ENCODE measurements at regions of chr16 and their contacts with region 1.

Region 1: GRCh38 chr16:89706507-89707263 is 5.2 kb upstream of the SPATA2L start:
- DNase-seq: no peak
- ATAC-seq: no peak
- H3K4me3 Mint-ChIP-seq: no peak overlapping the region
- H3K27ac Mint-ChIP-seq: no peak overlapping the region
- H3K4me1 Mint-ChIP-seq: peaks cover 10% of the 10 kb centered on the region
- H3K27me3 Mint-ChIP-seq: no peaks in the 10 kb centered on the region

Region 2: DNA sequence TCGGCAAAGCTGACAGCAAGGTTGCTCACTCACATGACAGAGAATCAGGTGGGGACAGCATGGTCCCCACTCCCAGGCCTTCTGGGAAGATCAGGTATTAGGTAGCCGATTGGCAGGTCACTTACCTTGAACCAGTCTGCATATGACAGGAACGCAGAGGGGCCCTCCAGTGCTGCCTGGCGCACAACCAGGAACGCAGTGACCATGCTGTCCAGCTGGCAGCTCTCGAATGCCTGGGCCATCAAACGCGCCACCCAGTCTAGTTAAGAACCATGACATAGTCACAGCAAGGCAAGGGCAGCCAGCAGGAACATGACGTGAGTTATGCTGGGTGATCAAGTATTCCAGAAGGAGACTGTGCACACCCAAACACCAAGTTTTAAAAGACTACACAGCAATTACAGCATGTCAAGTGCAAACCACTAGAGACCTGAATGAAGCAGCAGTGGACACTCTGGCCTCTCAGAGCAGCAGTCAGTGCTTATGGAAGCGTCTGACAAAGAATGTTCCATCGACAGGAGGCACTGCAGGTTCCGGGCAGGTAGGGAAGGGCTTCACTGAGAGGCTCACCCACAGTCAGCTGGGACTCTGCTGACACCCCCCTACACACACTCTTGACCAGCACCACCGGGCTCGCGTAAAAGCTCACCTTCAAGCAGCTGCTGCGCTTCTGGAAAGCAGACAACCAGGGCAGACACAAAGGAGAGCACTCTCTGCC is 84.8 kb after region 1 on chr16:
- CTCF ChIA-PET with region 1: interaction called, 31 read pairs
- POLR2A ChIA-PET with region 1: no interaction called
- intact Hi-C with region 1: loop called (anchors 1 to 2 kb)
- DNase-seq: no peak
- ATAC-seq: no peak
- H3K4me3 Mint-ChIP-seq: no peak overlapping the region
- H3K27ac Mint-ChIP-seq: no peak overlapping the region
- H3K4me1 Mint-ChIP-seq: peaks cover 6% of the 10 kb centered on the region
- H3K27me3 Mint-ChIP-seq: no peaks in the 10 kb centered on the region

Region 3: GRCh38 chr16:89860747-89861304 is 154.1 kb after region 1 on chr16:
- CTCF ChIA-PET with region 1: interaction called, 25 read pairs
- POLR2A ChIA-PET with region 1: interaction called, 6 read pairs
- intact Hi-C with region 1: loop called (anchors 1 kb)
- DNase-seq: peak; percentile 84
- ATAC-seq: peak; percentile 81
- H3K4me3 Mint-ChIP-seq: no peak overlapping the region
- H3K27ac Mint-ChIP-seq: no peak overlapping the region
- H3K4me1 Mint-ChIP-seq: peaks cover 28% of the 10 kb centered on the region
- H3K27me3 Mint-ChIP-seq: no peaks in the 10 kb centered on the region

Region 4: GRCh38 chr16:89909777-89910716 is 203.4 kb after region 1 on chr16:
- CTCF ChIA-PET with region 1: interaction called, 11 read pairs
- POLR2A ChIA-PET with region 1: no interaction called
- intact Hi-C with region 1: no loop called
- DNase-seq: peak; percentile 83
- ATAC-seq: peak; percentile 89
- H3K4me3 Mint-ChIP-seq: no peak overlapping the region
- H3K27ac Mint-ChIP-seq: no peak overlapping the region
- H3K4me1 Mint-ChIP-seq: no peaks in the 10 kb centered on the region
- H3K27me3 Mint-ChIP-seq: no peaks in the 10 kb centered on the region

Region 5: DNA sequence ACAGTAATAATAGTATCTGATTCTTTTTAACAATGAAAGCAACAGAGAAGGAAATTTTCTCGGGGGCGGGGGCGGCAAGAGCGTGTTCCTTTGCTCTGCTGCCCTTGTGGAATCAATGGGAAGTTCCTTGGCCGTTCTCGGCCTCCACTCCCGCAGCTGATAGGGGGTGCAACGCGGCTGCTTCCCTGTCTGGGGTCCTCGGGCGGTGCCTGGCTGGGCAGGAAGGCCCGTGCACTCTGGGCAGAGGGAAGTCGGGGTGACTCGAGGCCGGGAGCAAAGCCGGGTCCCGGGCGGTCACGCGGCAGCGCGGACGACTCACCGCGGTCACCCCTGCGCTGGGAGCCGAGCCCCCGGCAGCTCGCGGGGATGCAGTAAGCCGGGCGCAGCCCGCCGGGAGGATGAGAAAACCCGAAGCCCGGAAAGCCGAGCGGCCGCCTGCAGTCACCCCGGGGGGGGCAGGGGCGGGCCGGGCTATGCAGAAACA is 219.0 kb after region 1 on chr16:
- CTCF ChIA-PET with region 1: no interaction called
- POLR2A ChIA-PET with region 1: no interaction called
- intact Hi-C with region 1: no loop called
- DNase-seq: no peak
- ATAC-seq: no peak
- H3K4me3 Mint-ChIP-seq: no peak overlapping the region
- H3K27ac Mint-ChIP-seq: no peak overlapping the region
- H3K4me1 Mint-ChIP-seq: peaks cover 24% of the 10 kb centered on the region
- H3K27me3 Mint-ChIP-seq: peaks cover 26% of the 10 kb centered on the region